ENCODE measurements at regions of chr13 and their contacts with region 1.

Region 1: DNA sequence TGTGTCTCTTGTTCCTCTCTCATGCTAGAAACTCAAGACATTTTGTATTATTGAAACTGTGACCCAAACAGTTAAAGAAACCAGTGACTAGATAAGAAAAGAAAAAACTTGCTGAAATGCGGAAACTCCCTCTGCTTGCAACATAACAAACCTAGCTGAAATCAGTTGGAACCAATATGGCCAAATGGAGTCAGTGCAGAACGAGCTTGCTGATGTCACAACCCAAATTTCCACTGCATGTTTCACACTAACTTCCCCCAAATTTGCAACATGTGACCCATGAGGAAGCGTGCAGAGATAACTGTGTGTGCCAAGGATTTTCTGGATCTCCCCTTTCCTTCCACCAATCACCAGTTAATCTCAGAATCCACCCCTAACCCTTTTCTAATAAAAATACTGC is 208.0 kb downstream of the DLEU7 start:
- DNase-seq: peak; percentile 46
- H3K4me3 ChIP-seq: no peak overlapping the region
- H3K27ac ChIP-seq: peak overlapping the region in 1 of 2 donors; percentile 78
- H3K4me1 ChIP-seq: peaks cover 14% of the 10 kb centered on the region
- H3K27me3 ChIP-seq: no peaks in the 10 kb centered on the region
- CTCF ChIP-seq: no peak
- POLR2A ChIP-seq: no peak

Region 2: GRCh38 chr13:50319635-50320255 is 315.8 kb before region 1 on chr13:
- intact Hi-C with region 1: loop called (anchors 10 kb)
- DNase-seq: no peak
- H3K4me3 ChIP-seq: no peak overlapping the region
- H3K27ac ChIP-seq: no peak overlapping the region
- H3K4me1 ChIP-seq: no peaks in the 10 kb centered on the region
- H3K27me3 ChIP-seq: no peaks in the 10 kb centered on the region
- CTCF ChIP-seq: no peak
- POLR2A ChIP-seq: no peak

Region 3: GRCh38 chr13:50766695-50767094 is 131.2 kb after region 1 on chr13:
- intact Hi-C with region 1: no loop called
- DNase-seq: no peak
- H3K4me3 ChIP-seq: no peak overlapping the region
- H3K27ac ChIP-seq: no peak overlapping the region
- H3K4me1 ChIP-seq: no peaks in the 10 kb centered on the region
- H3K27me3 ChIP-seq: no peaks in the 10 kb centered on the region
- CTCF ChIP-seq: no peak
- POLR2A ChIP-seq: no peak

Measured in testis (tissue), 5 donors.